A549 (cell line): ENCODE measurements at regions of chr20 and their contacts with region 1.

Region 1: DNA sequence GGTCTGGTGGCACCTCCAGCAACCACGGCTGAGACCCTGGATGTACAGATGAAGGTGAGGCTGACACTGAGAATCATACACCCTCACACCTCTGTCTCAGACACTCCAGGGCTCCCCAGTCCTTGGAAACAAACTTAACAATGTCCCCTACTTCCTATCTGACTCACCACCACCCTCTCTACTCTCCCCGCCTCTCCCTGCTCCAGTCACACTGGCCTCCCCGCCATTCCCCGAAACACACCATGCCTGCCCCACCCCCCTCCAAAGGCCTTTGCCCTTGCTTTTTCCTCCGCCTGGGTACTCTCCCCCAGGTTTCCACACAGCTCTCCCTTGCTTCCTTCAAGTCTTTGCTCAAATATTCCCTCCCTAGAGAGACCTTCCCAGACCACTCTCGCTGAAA is 16.3 kb downstream of the BPI start:
- DNase-seq: no peak
- ATAC-seq: no peak
- H3K4me3 ChIP-seq: no peak overlapping the region
- H3K27ac ChIP-seq: no peak overlapping the region
- H3K4me1 ChIP-seq: no peaks in the 10 kb centered on the region
- CTCF ChIP-seq: no peak
- EP300 ChIP-seq: no peak
- POLR2A ChIP-seq: no peak
- RAD21 ChIP-seq: no peak

Region 2: DNA sequence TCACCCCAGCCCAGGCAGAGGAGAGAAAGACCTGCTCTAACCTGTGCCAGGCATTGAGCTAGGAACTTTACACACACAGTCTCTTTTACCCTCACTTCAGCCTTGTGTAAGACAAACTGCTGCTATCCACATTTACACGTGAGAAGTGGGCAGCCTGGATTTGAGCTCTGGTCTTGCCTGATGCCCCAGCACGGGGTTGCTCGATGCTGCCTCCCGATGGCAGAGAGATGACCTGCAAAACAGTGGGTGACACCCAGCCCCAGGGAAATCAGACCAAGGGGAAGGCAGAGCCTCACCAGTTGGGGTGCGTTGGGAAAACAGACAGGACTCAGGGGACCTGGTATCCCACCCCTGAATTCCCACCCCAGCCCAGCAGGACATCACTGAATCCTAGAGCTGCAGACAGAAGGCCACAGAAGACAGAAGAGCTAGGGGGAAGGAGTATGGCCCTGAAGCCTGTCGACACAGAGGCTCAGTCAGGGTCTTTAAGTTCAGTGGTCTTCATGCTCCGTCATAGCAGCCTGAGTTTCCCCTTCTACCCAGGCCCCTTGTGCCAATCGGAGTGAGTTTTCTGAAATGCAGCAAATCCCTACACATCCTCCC is 15.3 kb before region 1 on chr20:
- CTCF ChIA-PET with region 1: interaction called, 14 read pairs
- POLR2A ChIA-PET with region 1: no interaction called
- DNase-seq: peak; percentile 43 to 50
- ATAC-seq: peak; percentile 68 to 85; a peak in 4 of 6 replicates
- H3K4me3 ChIP-seq: no peak overlapping the region
- H3K27ac ChIP-seq: no peak overlapping the region
- H3K4me1 ChIP-seq: no peaks in the 10 kb centered on the region
- CTCF ChIP-seq: peak; percentile 39
- EP300 ChIP-seq: no peak
- POLR2A ChIP-seq: no peak
- RAD21 ChIP-seq: peak in 1 of 2 experiments; percentile 44; a peak in 4 of 5 replicates